ENCODE measurements at regions of chr13 and their contacts with region 1.

Region 1: GRCh38 chr13:43085545-43085944 is 62.2 kb downstream of the DNAJC15 start:
- DNase-seq: no peak
- H3K4me3 ChIP-seq: no peak overlapping the region
- H3K27ac ChIP-seq: no peak overlapping the region
- H3K4me1 ChIP-seq: peaks cover 0 to 13% (median 0%) of the 10 kb centered on the region in 3 donors
- H3K27me3 ChIP-seq: no peaks in the 10 kb centered on the region
- CTCF ChIP-seq: peak; percentile 37 to 81 (median 63)
- POLR2A ChIP-seq: no peak

Region 2: DNA sequence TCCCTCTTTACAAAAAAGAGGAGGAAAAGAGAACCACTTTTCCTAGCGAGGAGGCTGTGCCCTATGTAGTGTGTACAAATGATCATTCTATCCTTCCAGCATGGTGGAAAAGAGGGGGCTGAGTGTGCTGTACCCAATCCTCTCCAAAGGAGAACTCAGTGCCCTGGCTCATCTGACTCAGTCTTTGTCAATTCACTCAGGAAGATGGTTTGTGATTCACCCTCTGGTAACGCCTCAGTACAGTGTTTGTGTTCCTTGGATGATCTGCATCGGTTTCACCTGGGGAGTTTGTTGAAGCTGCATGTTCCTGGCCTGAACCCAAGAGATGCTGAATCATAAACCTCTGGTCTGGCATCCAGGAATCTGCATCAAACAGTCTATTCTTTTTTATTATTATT is 719.5 kb after region 1 on chr13:
- intact Hi-C with region 1: loop called (anchors 5 kb)
- DNase-seq: no peak
- H3K4me3 ChIP-seq: no peak overlapping the region
- H3K27ac ChIP-seq: peak overlapping the region in 1 of 4 donors; percentile 61
- H3K4me1 ChIP-seq: peaks cover 0 to 8% (median 7%) of the 10 kb centered on the region in 3 donors
- H3K27me3 ChIP-seq: no peaks in the 10 kb centered on the region
- CTCF ChIP-seq: no peak
- POLR2A ChIP-seq: no peak